Activated B cell treated with CpG ODN at 0.5 μM for 24 hours (primary cell): ENCODE measurements at regions of chr14 and their contacts with region 1.

Region 1: GRCh38 chr14:50830932-50831725 is at the start of gene NIN:
- DNase-seq: peak; percentile 81
- ATAC-seq: peak; percentile 83
- H3K4me3 Mint-ChIP-seq: peak within 1 kb of the TSS; percentile 98
- H3K27ac Mint-ChIP-seq: peak within 1 kb of the TSS; percentile 98
- H3K4me1 Mint-ChIP-seq: peaks cover 72% of the 10 kb centered on the region
- H3K27me3 Mint-ChIP-seq: no peaks in the 10 kb centered on the region
- CTCF ChIP-seq: no peak
- total RNA-seq, gene NIN: 145 and 156 TPM in 2 replicates

Region 2: DNA sequence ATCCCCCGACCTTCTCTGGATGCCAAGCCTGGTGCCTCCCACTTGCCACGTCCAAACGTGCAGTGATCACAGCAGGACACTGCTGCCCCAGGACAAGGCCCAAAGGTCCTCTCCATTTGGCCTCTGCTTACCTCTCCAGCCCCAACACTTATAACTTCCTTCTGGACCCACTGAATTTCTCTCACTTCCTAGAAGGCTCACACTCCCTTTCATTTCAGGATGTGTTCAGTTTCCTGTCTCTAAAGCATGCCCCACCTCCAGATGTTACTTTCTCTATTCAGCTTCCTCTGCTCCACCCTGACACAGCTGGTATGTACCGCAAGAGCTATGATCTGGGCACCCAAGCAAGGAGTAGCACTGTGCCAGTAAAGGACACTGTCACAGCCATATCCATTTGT is 467.4 kb before region 1 on chr14:
- CTCF ChIA-PET with region 1: no interaction called
- POLR2A ChIA-PET with region 1: no interaction called
- intact Hi-C with region 1: loop called (anchors 5 kb)
- DNase-seq: peak; percentile 27
- ATAC-seq: peak; percentile 99
- H3K4me3 Mint-ChIP-seq: peak overlapping the region; percentile 84
- H3K27ac Mint-ChIP-seq: peak overlapping the region; percentile 97
- H3K4me1 Mint-ChIP-seq: peaks cover 44% of the 10 kb centered on the region
- H3K27me3 Mint-ChIP-seq: no peaks in the 10 kb centered on the region
- CTCF ChIP-seq: no peak

Region 3: DNA sequence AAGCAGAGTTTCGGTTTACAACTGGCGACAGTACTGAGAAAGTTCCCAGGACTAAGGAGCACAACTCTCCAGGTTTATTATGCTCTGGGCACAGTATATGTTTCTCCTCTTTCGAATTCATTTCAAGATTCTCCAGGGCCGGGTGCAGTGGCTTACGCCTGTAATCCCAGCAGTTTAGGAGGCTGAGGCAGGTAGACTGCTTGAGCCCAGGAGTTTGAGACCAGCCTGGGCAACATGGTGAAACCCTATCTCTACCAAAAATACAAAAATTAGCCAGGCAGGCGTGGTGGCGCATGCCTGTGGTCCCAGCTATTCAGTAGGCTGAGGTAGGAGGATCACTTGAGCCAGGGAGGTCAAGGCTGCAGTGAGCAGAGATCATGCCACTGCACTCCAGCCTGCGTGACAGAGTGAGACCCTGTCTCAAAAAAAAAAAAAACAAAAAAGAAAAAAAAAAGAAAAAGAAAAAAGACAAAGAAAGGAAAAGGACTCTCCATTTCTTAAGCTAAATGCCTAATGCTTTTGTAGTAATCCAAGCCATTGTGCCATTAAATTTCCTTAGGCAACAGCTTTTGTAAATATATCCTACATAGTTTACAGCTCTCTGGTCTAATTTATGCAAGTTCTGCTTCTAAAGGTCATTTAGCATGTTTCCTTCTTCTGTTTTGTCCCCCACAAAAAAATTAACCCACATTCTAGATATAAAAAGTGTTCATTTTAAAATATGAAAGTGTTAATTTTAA is 236.4 kb before region 1 on chr14:
- CTCF ChIA-PET with region 1: no interaction called
- POLR2A ChIA-PET with region 1: no interaction called
- intact Hi-C with region 1: no loop called
- DNase-seq: no peak
- ATAC-seq: no peak
- H3K4me3 Mint-ChIP-seq: no peak overlapping the region
- H3K27ac Mint-ChIP-seq: no peak overlapping the region
- H3K4me1 Mint-ChIP-seq: no peaks in the 10 kb centered on the region
- H3K27me3 Mint-ChIP-seq: no peaks in the 10 kb centered on the region
- CTCF ChIP-seq: no peak

Region 4: DNA sequence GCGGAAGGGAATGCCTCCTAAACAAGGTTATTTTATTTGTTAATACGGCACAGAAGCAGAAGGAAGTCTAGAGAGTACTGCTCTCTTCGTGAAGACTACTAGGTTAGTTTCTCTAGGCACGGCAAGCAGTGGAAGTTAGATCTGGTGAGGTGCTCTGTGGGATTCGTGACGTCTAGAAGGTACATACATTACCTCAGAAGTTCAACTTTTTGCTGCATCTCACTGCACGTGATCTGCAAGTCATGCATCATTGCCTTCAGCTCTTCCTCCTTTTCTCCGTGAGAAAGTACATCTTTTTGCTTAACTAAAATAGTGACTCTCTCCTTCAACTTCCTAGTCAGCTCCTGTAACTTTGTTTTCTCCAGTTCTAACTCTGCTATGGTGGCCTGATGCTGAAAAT is 74.8 kb before region 1 on chr14:
- CTCF ChIA-PET with region 1: no interaction called
- POLR2A ChIA-PET with region 1: no interaction called
- intact Hi-C with region 1: loop called (anchors 2 kb)
- DNase-seq: peak; percentile 28
- ATAC-seq: peak; percentile 91
- H3K4me3 Mint-ChIP-seq: no peak overlapping the region
- H3K27ac Mint-ChIP-seq: no peak overlapping the region
- H3K4me1 Mint-ChIP-seq: peaks cover 6% of the 10 kb centered on the region
- H3K27me3 Mint-ChIP-seq: no peaks in the 10 kb centered on the region
- CTCF ChIP-seq: no peak

Region 5: GRCh38 chr14:50778721-50779483 is 52.2 kb before region 1 on chr14:
- CTCF ChIA-PET with region 1: interaction called, 21 read pairs
- POLR2A ChIA-PET with region 1: interaction called, 143 read pairs
- intact Hi-C with region 1: loop called (anchors 1 kb)
- DNase-seq: no peak
- ATAC-seq: peak; percentile 25
- H3K4me3 Mint-ChIP-seq: no peak overlapping the region
- H3K27ac Mint-ChIP-seq: peak overlapping the region; percentile 62
- H3K4me1 Mint-ChIP-seq: peaks cover 30% of the 10 kb centered on the region
- H3K27me3 Mint-ChIP-seq: no peaks in the 10 kb centered on the region
- CTCF ChIP-seq: no peak

Region 6: DNA sequence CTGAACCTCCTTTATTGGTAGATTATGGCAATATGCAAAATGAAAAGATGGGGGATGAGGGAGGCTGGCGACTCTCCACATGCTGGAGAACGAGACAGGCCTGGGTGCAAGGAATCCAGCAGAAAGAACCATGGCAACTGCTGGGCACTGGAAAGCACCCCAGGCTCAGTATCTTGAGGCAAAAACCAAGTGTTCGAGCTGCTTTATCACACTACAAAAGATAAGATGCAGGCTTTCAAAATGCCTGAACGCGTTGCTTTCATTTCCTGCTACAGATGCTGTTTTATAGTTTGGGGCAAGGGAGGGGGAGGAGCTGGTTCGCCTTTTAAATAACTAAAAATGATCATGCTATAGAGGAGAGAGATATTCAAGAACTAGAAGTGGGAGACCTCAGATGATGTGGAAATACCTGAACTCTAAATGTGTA is 39.1 kb before region 1 on chr14:
- CTCF ChIA-PET with region 1: interaction called, 47 read pairs
- POLR2A ChIA-PET with region 1: interaction called, 143 read pairs
- intact Hi-C with region 1: loop called (anchors 1 kb)
- DNase-seq: no peak
- ATAC-seq: peak; percentile 43
- H3K4me3 Mint-ChIP-seq: peak overlapping the region; percentile 66
- H3K27ac Mint-ChIP-seq: peak overlapping the region; percentile 92
- H3K4me1 Mint-ChIP-seq: peaks cover 98% of the 10 kb centered on the region
- H3K27me3 Mint-ChIP-seq: no peaks in the 10 kb centered on the region
- CTCF ChIP-seq: no peak

Region 7: GRCh38 chr14:50813544-50813863 is 17.6 kb before region 1 on chr14:
- CTCF ChIA-PET with region 1: interaction called, 3 read pairs
- POLR2A ChIA-PET with region 1: interaction called, 30 read pairs
- intact Hi-C with region 1: loop called (anchors 2 kb)
- DNase-seq: no peak
- ATAC-seq: peak; percentile 76
- H3K4me3 Mint-ChIP-seq: peak overlapping the region; percentile 80
- H3K27ac Mint-ChIP-seq: peak overlapping the region; percentile 92
- H3K4me1 Mint-ChIP-seq: peaks cover 67% of the 10 kb centered on the region
- H3K27me3 Mint-ChIP-seq: no peaks in the 10 kb centered on the region
- CTCF ChIP-seq: no peak

Region 8: DNA sequence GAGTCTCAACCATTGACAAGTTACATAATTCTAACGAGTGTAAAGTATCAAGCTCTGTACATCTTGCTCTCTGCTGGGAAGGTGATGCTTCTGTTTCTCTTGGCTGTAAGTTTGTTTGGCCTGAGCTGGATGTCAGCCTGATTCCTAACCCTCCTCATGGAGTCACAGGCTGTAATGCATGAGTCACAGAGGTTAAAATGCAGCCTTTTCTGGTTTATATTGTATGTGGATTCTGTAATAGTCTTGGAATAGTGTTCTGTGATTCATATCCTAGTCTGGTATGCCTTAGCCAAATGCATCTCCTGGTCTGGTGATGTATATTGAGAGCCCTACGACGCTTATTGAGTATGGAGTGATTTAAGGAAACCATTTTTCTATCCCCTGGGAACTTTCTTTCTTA is 716.1 kb after region 1 on chr14:
- CTCF ChIA-PET with region 1: no interaction called
- POLR2A ChIA-PET with region 1: no interaction called
- intact Hi-C with region 1: no loop called
- DNase-seq: no peak
- ATAC-seq: no peak
- H3K4me3 Mint-ChIP-seq: no peak overlapping the region
- H3K27ac Mint-ChIP-seq: no peak overlapping the region
- H3K4me1 Mint-ChIP-seq: no peaks in the 10 kb centered on the region
- H3K27me3 Mint-ChIP-seq: peaks cover 14% of the 10 kb centered on the region
- CTCF ChIP-seq: no peak